Spleen (tissue), 13 donors: ENCODE measurements at regions of chr4 and their contacts with region 1.

Region 1: GRCh38 chr4:95095348-95095974 is 337.7 kb downstream of the BMPR1B start:
- DNase-seq: no peak
- H3K4me3 ChIP-seq: no peak overlapping the region
- H3K27ac ChIP-seq: no peak overlapping the region
- H3K4me1 ChIP-seq: no peaks in the 10 kb centered on the region
- H3K27me3 ChIP-seq: no peaks in the 10 kb centered on the region
- CTCF ChIP-seq: peak in 5 of 11 experiments; percentile 18 to 46 (median 33)
- POLR2A ChIP-seq: no peak

Region 2: DNA sequence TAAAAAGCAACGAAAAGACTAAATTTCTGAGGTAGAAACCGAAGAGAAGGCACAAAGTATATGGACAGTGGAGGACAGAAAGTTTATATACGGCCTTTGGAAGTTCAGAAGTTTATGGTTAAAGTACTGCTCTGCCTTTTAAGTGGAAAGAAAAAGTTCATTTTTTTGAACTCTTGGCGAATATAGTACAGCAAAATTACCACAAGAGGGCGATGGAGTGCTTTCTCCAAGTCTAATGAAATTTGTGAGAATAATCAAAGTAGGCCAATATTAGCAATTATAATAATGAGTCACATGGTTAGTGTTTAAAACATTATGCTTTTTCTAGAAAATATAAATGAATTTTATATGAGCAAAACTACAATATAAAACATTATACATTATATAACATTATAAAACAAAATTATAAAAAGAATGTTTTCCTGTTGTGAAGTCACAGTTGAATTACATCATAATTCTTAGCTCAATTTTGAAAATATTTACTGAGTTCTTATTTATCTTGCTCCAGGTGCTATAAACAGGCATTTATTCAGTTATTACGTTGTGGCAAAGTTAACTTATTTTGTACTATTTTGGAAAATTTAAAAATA is 473.9 kb before region 1 on chr4:
- intact Hi-C with region 1: loop called (anchors 10 kb)
- DNase-seq: no peak
- H3K4me3 ChIP-seq: no peak overlapping the region
- H3K27ac ChIP-seq: no peak overlapping the region
- H3K4me1 ChIP-seq: peaks cover 0 to 5% (median 0%) of the 10 kb centered on the region in 6 donors
- H3K27me3 ChIP-seq: no peaks in the 10 kb centered on the region
- CTCF ChIP-seq: peak in 9 of 11 experiments; percentile 45 to 78 (median 64)
- POLR2A ChIP-seq: no peak

Region 3: DNA sequence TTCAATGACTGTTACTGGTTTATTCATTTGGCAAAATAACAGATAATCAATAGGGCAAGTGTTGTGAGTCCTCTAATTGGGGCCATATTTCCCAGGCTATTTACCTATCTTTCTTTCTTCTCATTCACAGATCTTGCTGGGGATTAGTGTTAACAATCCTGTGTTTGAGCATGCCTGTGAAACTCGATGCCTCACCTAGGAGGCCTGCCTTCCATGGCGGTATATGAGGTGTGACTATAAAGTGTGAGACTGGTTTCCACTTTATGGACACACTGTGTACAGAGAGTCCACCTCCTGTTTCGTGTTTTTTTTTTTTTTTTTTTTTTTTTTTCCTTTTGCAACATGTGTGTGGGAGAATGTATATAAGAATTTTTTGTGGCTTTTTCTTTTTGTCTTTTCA is 138.4 kb before region 1 on chr4:
- intact Hi-C with region 1: no loop called
- DNase-seq: no peak
- H3K4me3 ChIP-seq: no peak overlapping the region
- H3K27ac ChIP-seq: no peak overlapping the region
- H3K4me1 ChIP-seq: no peaks in the 10 kb centered on the region
- H3K27me3 ChIP-seq: no peaks in the 10 kb centered on the region
- CTCF ChIP-seq: no peak
- POLR2A ChIP-seq: no peak

Region 4: DNA sequence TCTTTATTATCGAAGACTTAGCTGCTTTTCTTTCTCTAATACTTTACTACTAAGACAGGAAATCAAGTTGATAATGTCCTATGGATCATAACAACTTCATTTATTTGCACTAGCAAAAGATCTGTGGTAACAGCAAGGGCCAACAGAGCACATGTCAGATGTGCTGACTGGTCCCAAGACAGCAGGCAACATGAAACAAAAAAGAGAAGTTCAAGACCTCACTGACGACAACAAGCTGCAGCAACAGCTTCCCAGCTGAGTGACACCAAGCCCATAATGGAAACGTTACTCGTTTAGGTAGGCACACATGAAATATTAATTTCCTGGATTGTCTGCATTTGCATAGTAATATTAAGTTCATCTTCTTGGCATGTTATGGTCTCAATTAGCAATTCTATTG is 326.4 kb after region 1 on chr4:
- intact Hi-C with region 1: no loop called
- DNase-seq: no peak
- H3K4me3 ChIP-seq: no peak overlapping the region
- H3K27ac ChIP-seq: no peak overlapping the region
- H3K4me1 ChIP-seq: no peaks in the 10 kb centered on the region
- H3K27me3 ChIP-seq: no peaks in the 10 kb centered on the region
- CTCF ChIP-seq: no peak
- POLR2A ChIP-seq: no peak